ENCODE measurements at regions of chr4 and their contacts with region 1.

Region 1: GRCh38 chr4:151227731-151228130 is 49.2 kb upstream of the PRSS48 start:
- DNase-seq: no peak
- ATAC-seq: peak; percentile 90

Region 2: GRCh38 chr4:151169223-151169622 is 58.5 kb before region 1 on chr4:
- intact Hi-C with region 1: loop called (anchors 5 kb)
- DNase-seq: peak; percentile 83
- ATAC-seq: peak; percentile 95